Activated T-helper 1 cell treated with anti-CD3 and anti-CD28 coated beads, Interleukin-12 subunit alpha, Interleukin-12 subunit beta, Interleukin-2, Interleukin-4 antibody, amounts not matched to agents 30 ng/mL and 10 ng/mL and 1 ng/mL, durations not matched to agents 14 hours and 24 hours and 36 hours (primary cell): ENCODE measurements at regions of chr6 and their contacts with region 1.

Region 1: DNA sequence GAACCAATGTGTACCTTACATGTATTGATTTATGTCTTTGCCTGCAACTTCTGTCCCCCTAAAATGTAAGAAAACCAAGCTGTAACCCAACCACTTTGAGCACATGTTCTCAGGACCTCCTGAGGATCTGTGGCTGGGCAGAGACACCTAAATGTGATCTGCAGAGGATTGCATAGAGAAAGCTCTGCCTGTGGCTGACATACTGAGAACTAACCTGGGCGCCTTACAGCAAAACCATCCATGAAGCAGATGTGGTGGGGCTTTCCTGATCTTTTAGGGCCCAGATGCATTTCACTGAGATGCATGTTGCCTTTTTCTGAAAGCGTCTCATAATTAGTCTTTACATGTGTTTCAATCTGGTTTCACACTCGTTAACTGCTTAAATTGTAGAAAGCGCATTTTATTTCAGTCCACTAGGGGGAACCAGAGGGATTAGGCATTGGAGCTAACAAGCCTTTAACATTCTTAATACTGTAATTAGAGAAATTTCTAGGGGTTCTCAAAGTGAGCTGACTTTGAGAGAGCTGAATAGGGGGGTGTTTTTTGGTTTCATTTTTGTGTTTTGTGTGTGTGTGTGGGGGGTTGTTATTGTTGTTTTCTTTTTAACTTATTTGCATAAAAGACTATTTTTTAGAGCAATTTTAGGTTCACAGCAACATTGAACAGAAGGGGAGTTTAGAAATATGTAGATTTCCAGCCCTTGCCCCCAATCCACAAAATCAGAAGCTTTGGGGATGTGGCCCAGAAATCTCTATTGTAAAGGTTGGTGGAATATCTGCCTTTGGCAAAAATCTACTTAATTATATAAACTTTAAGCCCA is 50.9 kb upstream of the FAM184A start:
- DNase-seq: no peak
- H3K4me3 Mint-ChIP-seq: no peak overlapping the region
- H3K27ac Mint-ChIP-seq: peak overlapping the region; percentile 82
- H3K4me1 Mint-ChIP-seq: peaks cover 12% of the 10 kb centered on the region
- H3K27me3 Mint-ChIP-seq: peaks cover 9% of the 10 kb centered on the region

Region 2: DNA sequence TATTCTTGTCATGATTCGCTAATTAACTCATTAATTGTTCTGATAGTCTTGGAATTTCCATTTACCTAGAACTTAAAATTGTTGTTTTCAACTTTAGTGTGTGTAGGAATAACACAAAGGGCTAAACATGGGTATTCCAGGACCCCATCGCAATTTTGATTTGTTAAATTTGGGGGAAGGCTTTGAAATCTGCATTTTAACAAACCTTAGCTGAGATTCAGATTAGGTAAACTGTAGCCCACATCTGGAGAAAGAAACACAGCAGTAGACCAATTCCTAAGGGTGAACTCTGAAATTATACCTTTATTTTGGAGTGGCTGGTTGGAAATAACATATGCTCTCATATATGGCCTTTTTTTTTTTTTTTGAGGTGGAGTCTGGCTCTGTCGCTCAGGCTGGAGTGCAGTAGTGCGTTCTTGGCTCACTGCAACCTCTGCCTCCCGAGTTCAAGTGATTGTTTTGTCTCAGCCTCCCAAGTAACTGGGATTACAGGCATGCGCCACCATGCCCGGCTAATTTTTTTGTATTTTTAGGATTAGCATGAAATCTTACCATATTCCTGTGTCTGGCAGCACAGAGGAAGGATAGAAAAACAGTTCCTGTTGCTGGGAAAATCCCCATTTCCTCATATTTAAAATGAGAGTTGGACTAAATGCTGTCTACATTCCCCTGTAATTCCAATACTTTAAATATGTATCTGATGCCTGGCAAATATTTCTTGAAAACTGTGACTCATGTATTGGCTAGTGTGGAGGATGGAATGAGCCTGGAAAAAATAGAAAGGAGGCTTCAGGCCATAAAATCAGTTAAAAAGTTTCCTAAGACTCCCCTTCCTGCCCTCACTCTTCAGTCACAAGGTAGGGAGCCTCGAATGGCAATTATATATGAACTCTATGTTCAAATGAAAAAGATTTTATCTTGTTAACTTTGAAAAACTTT is 45.8 kb after region 1 on chr6:
- intact Hi-C with region 1: loop called (anchors 5 kb)
- DNase-seq: no peak
- H3K4me3 Mint-ChIP-seq: no peak overlapping the region
- H3K27ac Mint-ChIP-seq: no peak overlapping the region
- H3K4me1 Mint-ChIP-seq: peaks cover 13% of the 10 kb centered on the region
- H3K27me3 Mint-ChIP-seq: no peaks in the 10 kb centered on the region

Region 3: GRCh38 chr6:119192200-119192599 is 62.8 kb after region 1 on chr6:
- intact Hi-C with region 1: loop called (anchors 5 kb)
- DNase-seq: no peak
- H3K4me3 Mint-ChIP-seq: no peak overlapping the region
- H3K27ac Mint-ChIP-seq: no peak overlapping the region
- H3K4me1 Mint-ChIP-seq: no peaks in the 10 kb centered on the region
- H3K27me3 Mint-ChIP-seq: no peaks in the 10 kb centered on the region

Region 4: DNA sequence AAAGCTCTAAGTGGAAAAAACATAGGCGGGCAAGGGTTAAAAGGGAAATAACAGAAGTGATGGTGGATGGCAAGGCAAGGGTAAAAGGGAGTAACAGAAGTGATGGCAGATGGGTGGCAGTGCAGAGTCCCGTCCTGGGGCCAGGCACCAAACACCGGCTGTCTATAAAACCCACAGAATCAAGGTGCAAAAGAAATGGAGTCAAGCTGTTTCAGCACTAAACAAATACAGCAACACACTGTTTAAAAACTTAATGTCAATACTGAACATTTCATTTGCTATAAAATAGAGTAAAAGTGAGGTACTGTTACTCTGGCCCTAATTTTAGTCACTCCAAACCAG is 132.6 kb after region 1 on chr6:
- intact Hi-C with region 1: loop called (anchors 1 kb)
- DNase-seq: no peak
- H3K4me3 Mint-ChIP-seq: peak overlapping the region; percentile 46
- H3K27ac Mint-ChIP-seq: peak overlapping the region; percentile 91
- H3K4me1 Mint-ChIP-seq: peaks cover 50% of the 10 kb centered on the region
- H3K27me3 Mint-ChIP-seq: no peaks in the 10 kb centered on the region

Region 5: GRCh38 chr6:119313937-119314884 is 184.9 kb after region 1 on chr6:
- intact Hi-C with region 1: loop called (anchors 1 kb)
- DNase-seq: peak; percentile 45
- H3K4me3 Mint-ChIP-seq: peak overlapping the region; percentile 73
- H3K27ac Mint-ChIP-seq: peak overlapping the region; percentile 99
- H3K4me1 Mint-ChIP-seq: peaks cover 76% of the 10 kb centered on the region
- H3K27me3 Mint-ChIP-seq: no peaks in the 10 kb centered on the region